ENCODE measurements at regions of chrX and their contacts with region 1.

Region 1: DNA sequence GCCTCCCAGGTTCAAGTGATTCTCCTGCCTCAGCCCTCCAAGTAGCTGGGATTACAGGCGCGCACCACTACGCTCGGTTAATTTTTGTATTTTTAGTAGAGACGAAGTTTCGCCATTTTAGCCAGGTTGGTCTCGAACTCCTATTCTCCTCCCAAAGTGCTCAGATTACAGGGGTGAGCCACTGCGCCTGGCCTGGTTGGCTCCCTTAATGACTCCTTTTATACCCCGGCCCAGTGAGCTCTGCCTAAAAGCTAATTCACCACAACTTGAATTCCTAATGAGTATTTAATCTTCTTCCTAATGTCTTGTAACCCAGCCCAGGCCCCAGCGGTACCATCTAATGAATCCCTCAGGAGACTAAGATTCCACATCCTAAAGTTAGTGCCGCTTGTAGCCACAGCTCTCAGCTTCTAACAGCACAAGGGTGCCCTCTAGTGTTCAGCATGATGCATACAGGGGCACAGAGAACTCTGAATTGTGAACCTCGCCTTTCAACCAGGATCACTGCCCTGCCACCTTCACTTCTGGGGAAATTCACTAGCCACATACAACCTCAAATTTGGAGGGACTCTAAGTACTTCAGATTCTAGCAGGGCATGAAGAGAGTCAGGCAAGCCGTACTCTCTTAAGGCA is 89.5 kb downstream of the OR13H1 start:
- DNase-seq: peak; percentile 31 to 51
- H3K4me3 ChIP-seq: no peak overlapping the region
- H3K27ac ChIP-seq: no peak overlapping the region
- H3K4me1 ChIP-seq: no peaks in the 10 kb centered on the region
- H3K27me3 ChIP-seq: no peaks in the 10 kb centered on the region
- CTCF ChIP-seq: peak in 5 of 6 experiments; percentile 50 to 66 (median 58)
- POLR2A ChIP-seq: no peak

Region 2: DNA sequence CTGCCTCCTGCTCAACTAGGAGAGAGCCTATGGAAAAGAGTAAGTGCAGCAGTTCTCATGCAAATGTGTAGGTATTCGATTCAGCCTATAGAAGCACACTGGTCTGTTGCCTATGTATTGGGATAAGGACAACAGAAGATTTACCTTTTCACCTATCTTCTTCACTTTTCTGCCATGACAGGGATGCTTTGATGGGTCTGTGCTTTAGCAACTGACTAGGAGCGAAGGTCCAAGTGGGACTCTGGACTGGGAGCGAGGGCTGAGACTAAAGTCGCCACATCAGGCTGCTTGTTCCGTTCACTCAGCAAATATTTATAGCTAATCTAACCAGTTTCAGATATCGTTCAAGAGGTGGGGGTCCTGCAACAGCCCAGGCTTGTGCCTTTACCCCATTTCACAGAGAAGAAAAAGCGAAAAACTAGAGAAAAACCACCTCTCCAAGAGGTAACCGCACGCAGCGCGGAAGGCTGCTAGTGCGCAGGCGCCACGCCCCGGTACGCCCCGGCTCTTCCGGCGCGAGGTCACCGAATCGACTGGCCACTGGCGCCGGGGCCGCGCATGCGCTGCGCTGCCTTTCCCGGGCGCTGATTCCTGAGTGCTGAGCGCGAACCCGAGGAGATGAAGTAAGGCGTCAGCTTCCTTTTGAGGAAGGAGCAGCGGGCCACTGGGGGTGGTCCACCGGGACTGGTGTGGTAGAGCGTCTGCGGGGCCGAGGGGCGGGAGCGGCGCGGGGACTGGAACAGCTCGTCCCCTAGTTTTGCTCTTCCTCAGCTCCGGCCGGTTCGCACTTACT is 1231.8 kb before region 1 on chrX and contains the start of gene RBMX2:
- intact Hi-C with region 1: no loop called
- DNase-seq: peak; percentile 69 to 71
- H3K4me3 ChIP-seq: peak within 1 kb of the TSS in 2 of 3 donors; percentile 37 to 60
- H3K27ac ChIP-seq: peak within 1 kb of the TSS; percentile 61 to 80 (median 64)
- H3K4me1 ChIP-seq: peaks cover 0 to 7% of the 10 kb centered on the region in 2 donors
- H3K27me3 ChIP-seq: no peaks in the 10 kb centered on the region
- CTCF ChIP-seq: no peak
- POLR2A ChIP-seq: peak in 1 of 2 donors; percentile 60
- total RNA-seq, gene RBMX2: 11.5 to 27.1 (median 14.1) TPM

Region 3: GRCh38 chrX:130994671-130995070 is 638.7 kb before region 1 on chrX:
- intact Hi-C with region 1: loop called (anchors 10 kb)
- DNase-seq: peak; percentile 2 to 3
- H3K4me3 ChIP-seq: no peak overlapping the region
- H3K27ac ChIP-seq: no peak overlapping the region
- H3K4me1 ChIP-seq: no peaks in the 10 kb centered on the region
- H3K27me3 ChIP-seq: no peaks in the 10 kb centered on the region
- CTCF ChIP-seq: peak in 2 of 6 experiments; percentile 24 to 43
- POLR2A ChIP-seq: no peak

Region 4: GRCh38 chrX:131443796-131444195 is 189.6 kb before region 1 on chrX:
- intact Hi-C with region 1: no loop called
- DNase-seq: no peak
- H3K4me3 ChIP-seq: no peak overlapping the region
- H3K27ac ChIP-seq: no peak overlapping the region
- H3K4me1 ChIP-seq: no peaks in the 10 kb centered on the region
- H3K27me3 ChIP-seq: no peaks in the 10 kb centered on the region
- CTCF ChIP-seq: no peak
- POLR2A ChIP-seq: no peak

Measured in thyroid gland (tissue), 4 donors.